Prostate gland (tissue), 2 donors: ENCODE measurements at regions of chr17 and their contacts with region 1.

Region 1: DNA sequence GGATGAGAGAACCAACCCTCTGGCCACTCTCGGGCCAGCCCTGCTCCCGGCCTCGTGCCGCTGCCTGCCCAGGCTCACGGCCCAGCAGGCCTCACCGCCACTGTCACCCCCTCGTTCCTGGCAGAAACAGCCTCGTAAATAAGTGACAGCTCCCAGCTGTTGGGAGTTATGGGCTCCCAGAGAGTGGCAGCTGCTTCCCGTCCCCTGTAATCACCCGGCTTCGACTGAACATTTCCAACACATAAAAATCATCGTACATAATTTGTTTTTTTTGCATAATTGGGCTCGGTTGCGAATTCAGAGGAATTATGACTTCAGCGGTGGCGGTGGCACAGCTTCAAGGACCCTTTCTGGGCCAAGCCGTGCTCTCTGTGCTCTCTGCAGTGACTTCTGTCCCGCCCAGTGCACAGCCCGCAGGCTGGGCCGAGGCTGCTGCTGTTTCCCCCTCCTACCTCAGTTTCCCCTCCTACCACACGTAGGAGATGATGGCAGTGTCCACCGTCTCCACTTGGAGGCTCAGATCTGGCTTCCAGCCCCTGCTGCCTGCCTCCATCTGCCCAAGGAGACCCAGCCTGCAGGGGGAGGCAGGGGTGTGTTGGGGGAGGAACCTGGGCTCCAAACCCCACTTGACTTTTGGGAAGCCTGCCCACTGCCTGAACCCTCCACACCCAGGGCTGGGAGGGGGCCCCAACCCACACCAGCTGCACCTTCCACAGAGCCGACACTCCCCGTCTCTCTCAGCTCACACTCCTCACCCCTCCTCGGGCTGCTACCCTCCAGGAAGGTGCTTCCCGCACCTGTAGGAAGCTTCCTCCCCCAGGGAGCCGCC is 84.9 kb downstream of the RTN4RL1 start:
- DNase-seq: no peak
- H3K4me3 ChIP-seq: no peak overlapping the region
- H3K27ac ChIP-seq: no peak overlapping the region
- H3K4me1 ChIP-seq: no peaks in the 10 kb centered on the region
- H3K27me3 ChIP-seq: no peaks in the 10 kb centered on the region
- CTCF ChIP-seq: no peak
- POLR2A ChIP-seq: no peak

Region 2: DNA sequence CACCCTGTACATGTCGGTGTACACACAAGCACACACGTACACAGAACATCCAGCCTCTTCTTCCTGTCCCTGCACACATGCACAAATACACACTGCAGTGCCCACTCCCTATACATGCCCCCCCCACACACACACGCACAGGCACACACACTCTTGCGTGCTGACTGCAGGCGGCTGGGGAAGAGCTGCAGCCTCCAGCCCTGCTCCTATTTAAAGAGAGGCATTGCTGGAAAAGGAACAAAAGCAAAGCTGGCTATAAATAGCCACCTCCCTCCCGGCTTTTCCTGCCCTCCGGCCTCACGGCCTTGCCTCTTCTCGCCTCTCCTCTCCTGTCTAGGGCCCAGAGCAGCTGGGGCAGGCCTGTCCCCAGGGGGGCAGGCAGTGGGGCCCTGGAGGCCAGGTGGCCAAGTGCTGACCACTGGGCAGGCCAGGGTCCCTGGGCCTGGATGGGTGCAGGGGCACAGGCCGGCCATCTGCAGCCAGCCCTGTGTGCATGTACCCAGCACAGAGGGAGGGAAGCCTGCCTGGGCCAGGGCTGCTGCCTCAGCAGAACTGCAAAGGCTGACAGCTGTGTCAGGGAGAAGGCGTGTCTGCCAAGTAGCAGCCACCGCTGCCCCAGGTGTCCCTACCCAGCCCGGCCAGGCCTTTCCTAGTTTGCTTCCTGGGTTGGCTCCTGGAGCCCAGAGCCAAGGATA is 59.5 kb after region 1 on chr17:
- intact Hi-C with region 1: loop called (anchors 5 kb)
- DNase-seq: peak; percentile 71
- H3K4me3 ChIP-seq: no peak overlapping the region
- H3K27ac ChIP-seq: peak overlapping the region; percentile 80 to 87
- H3K4me1 ChIP-seq: peaks cover 37% of the 10 kb centered on the region
- H3K27me3 ChIP-seq: no peaks in the 10 kb centered on the region
- CTCF ChIP-seq: no peak
- POLR2A ChIP-seq: no peak